ENCODE measurements at regions of chr14 and their contacts with region 1.

Region 1: GRCh38 chr14:93655078-93655750 is 133.1 kb downstream of the PRIMA1 start:
- DNase-seq: no peak
- ATAC-seq: peak; percentile 70
- H3K4me3 ChIP-seq: no peak overlapping the region
- H3K27ac ChIP-seq: no peak overlapping the region
- H3K4me1 ChIP-seq: no peaks in the 10 kb centered on the region
- H3K27me3 ChIP-seq: no peaks in the 10 kb centered on the region

Region 2: GRCh38 chr14:93892923-93893558 is 237.8 kb after region 1 on chr14:
- intact Hi-C with region 1: loop called (anchors 1 to 2 kb)
- DNase-seq: peak; percentile 74 to 94
- ATAC-seq: peak; percentile 82
- H3K4me3 ChIP-seq: no peak overlapping the region
- H3K27ac ChIP-seq: no peak overlapping the region
- H3K4me1 ChIP-seq: no peaks in the 10 kb centered on the region
- H3K27me3 ChIP-seq: no peaks in the 10 kb centered on the region

Region 3: GRCh38 chr14:93906341-93907329 is 251.4 kb after region 1 on chr14:
- intact Hi-C with region 1: loop called (anchors 5 kb)
- DNase-seq: peak; percentile 67 to 84
- ATAC-seq: no peak
- H3K4me3 ChIP-seq: no peak overlapping the region
- H3K27ac ChIP-seq: no peak overlapping the region
- H3K4me1 ChIP-seq: no peaks in the 10 kb centered on the region
- H3K27me3 ChIP-seq: no peaks in the 10 kb centered on the region